ENCODE measurements at regions of chr17 and their contacts with region 1.

Region 1: DNA sequence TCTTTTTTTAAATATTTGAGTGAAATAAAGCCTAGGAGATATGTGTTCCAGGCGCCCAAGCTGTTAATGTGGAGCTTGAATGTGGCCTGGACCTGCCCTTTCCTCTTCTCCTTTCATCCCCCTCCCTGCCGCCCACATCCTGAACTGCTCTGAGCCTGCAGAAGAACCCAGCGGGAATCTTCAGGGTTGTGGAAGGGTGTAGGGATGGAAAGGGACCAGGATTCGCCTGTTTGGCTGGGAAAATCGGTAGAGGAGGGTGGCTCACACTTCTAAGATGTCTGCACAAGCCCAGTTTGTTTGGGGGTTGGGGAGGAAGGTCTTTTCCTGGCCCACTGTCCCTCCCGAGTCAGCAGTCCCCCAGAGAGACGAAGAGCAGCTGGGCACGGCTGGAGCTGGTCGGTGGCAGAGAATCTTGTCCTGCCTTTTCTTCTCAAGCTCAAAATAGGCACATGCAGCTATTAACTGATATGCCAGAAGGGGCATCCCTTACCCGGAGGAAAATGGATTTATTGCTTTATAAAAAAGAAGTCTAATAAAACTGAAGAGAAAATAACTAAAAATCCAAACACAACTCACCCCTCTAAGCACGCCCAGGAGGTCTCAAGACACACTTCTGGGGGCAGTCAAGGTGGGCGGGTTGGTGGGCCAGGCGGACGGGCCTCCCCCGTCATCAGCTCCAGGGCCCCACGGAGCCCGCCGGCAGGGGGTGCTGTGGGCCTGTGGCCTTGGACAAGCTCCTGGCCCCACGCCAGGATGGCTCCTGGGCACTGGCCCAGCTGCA is 11.5 kb upstream of the PITPNA start:
- DNase-seq: peak; percentile 73
- H3K4me3 ChIP-seq: no peak overlapping the region
- H3K27ac ChIP-seq: no peak overlapping the region
- H3K4me1 ChIP-seq: no peaks in the 10 kb centered on the region
- H3K27me3 ChIP-seq: no peaks in the 10 kb centered on the region
- CTCF ChIP-seq: peak; percentile 83

Region 2: GRCh38 chr17:1241929-1242328 is 332.2 kb before region 1 on chr17:
- CTCF ChIA-PET with region 1: no interaction called
- POLR2A ChIA-PET with region 1: no interaction called
- intact Hi-C with region 1: no loop called
- DNase-seq: no peak
- H3K4me3 ChIP-seq: no peak overlapping the region
- H3K27ac ChIP-seq: no peak overlapping the region
- H3K4me1 ChIP-seq: no peaks in the 10 kb centered on the region
- H3K27me3 ChIP-seq: no peaks in the 10 kb centered on the region
- CTCF ChIP-seq: no peak

Region 3: GRCh38 chr17:1648963-1649843 is 75.1 kb after region 1 on chr17:
- CTCF ChIA-PET with region 1: interaction called, 16 read pairs
- POLR2A ChIA-PET with region 1: no interaction called
- intact Hi-C with region 1: no loop called
- DNase-seq: peak; percentile 95
- H3K4me3 ChIP-seq: peak overlapping the region; percentile 60
- H3K27ac ChIP-seq: no peak overlapping the region
- H3K4me1 ChIP-seq: peaks cover 12% of the 10 kb centered on the region
- H3K27me3 ChIP-seq: no peaks in the 10 kb centered on the region
- CTCF ChIP-seq: peak; percentile 77; the same call in 1 of the 2 replicates

Measured in A673 (cell line).